ENCODE measurements at regions of chr11 and their contacts with region 1.

Region 1: GRCh38 chr11:72814286-72815109 is at the start of gene ATG16L2:
- DNase-seq: peak; percentile 93
- H3K4me3 ChIP-seq: peak within 1 kb of the TSS; percentile 73 to 94 (median 84)
- H3K27ac ChIP-seq: peak within 1 kb of the TSS; percentile 87 to 93 (median 92)
- H3K4me1 ChIP-seq: peaks cover 0 to 39% (median 37%) of the 10 kb centered on the region in 4 donors
- H3K27me3 ChIP-seq: no peaks in the 10 kb centered on the region
- CTCF ChIP-seq: peak in 1 of 4 experiments; percentile 5
- EP300 ChIP-seq: no peak
- POLR2A ChIP-seq: peak; percentile 29 to 69
- total RNA-seq, gene ATG16L2: 16.8 to 36.8 (median 20.2) TPM

Region 2: GRCh38 chr11:72722050-72722748 is 92.3 kb before region 1 on chr11:
- intact Hi-C with region 1: loop called (anchors 2 kb)
- DNase-seq: peak; percentile 93
- H3K4me3 ChIP-seq: peak overlapping the region; percentile 56 to 82 (median 62)
- H3K27ac ChIP-seq: peak overlapping the region; percentile 83 to 89 (median 88)
- H3K4me1 ChIP-seq: peaks cover 0 to 67% (median 53%) of the 10 kb centered on the region in 4 donors
- H3K27me3 ChIP-seq: no peaks in the 10 kb centered on the region
- CTCF ChIP-seq: no peak
- EP300 ChIP-seq: no peak
- POLR2A ChIP-seq: no peak